ENCODE measurements at regions of chr11 and their contacts with region 1.

Region 1: DNA sequence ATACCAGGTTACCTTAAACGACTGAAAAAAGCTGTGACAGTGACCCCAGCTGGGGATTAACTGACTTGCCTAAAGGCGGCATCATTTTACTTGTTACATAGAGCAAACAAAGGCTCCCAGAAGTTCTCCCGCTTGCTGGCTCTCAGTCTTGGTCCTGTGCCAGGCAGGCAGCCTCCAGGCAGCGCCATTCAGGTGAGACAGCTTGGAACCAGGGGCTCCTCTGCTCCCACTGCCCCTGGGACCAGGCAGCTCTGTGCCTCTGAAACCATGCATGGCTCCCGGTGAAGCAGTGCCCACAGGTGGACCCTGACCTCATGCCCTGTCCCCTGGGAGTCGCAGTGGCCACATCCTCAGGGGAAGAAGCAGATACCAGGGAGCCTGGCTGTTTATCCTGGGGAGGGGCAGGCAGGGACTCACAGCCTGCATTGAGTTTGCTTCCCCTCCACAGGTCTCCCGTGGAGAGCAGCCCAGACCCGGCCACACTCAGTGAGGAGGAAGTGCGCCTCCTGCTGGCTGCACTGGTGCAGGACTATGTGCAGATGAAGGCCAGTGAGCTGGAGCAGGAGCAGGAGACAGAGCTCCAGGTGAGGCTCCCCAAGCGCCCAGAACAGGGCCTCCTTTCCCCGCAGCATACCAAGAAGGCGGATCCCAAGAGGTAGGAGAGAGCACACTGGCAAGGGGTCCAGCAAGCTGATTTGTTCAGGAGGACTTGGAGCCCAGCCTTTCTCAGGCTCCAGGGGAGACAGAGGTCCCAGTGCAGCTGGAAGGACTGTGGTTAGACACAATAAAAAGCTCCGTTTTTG is 15.6 kb upstream of the CYP2R1 start:
- DNase-seq: peak; percentile 79
- H3K4me3 Mint-ChIP-seq: no peak overlapping the region
- H3K27ac Mint-ChIP-seq: no peak overlapping the region
- H3K4me1 Mint-ChIP-seq: peaks cover 41% of the 10 kb centered on the region
- H3K27me3 Mint-ChIP-seq: no peaks in the 10 kb centered on the region

Region 2: DNA sequence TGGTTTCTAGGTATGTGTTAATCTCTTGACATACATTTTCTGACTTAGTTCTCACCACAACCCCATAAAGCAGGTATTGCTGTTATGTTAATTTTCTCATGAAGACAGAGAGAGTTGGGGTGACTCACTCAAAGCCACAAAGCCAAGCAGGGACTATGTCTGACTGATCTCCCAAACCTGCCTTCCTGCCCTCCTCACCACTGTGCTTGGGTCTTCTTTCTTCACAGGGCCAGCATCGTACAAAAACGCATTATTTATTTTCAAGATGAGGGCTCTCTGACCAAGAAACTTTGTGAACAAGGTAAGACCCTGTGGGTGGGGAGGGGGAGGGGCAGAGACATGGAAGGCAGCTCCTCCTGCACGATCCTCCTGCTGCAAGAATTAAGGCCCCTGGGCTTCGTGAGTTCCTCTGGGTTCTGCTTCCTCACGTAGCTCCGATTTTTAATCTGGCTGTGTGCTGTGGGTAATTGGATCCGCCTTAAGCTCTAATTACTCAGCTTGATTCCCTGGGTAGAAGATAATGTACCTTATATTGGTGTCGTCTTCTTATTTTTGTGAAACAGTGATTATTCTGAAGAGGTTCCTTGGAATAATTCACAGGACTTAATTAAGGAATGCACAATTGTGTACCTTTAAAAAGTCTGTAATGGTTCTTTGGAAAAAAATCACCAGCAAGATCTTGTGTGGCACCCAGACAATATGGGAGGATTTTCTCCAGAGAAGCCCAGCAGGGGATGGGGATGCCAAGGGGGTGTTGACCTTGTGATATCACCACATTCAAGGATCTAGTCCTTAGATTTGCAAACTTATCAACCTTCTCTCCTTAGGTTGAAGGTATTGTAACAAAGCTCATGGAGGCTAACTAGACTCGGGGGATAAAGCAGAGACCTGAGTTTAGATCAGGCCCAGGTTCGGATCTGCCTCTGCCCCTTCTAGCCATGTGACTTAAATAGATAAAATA is 832.2 kb before region 1 on chr11:
- intact Hi-C with region 1: loop called (anchors 10 kb)
- DNase-seq: peak; percentile 57
- H3K4me3 Mint-ChIP-seq: no peak overlapping the region
- H3K27ac Mint-ChIP-seq: no peak overlapping the region
- H3K4me1 Mint-ChIP-seq: peaks cover 43% of the 10 kb centered on the region
- H3K27me3 Mint-ChIP-seq: peaks cover 20% of the 10 kb centered on the region

Region 3: DNA sequence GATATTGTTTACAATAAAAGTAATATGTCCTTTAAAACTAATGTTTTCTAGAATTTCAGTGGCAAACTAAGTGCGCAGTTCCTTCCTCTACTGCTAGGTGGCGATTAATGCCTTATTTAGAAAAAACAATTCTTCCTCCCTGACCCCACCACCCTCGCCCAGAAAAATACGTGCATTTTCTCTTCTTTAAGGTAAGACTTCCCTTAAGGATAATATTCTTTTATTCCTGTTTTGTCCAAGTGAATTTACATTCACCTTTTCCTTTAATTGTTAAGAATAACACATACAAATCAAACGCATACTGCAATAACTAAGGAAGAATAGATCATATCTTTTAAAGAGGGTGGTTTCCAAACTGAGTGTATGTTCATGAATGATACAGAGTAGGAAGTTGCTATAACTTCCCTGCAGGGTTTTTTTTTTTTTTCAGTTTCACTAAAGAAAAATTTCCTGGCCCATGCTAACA is 370.4 kb before region 1 on chr11:
- intact Hi-C with region 1: loop called (anchors 1 kb)
- DNase-seq: no peak
- H3K4me3 Mint-ChIP-seq: peak overlapping the region; percentile 63
- H3K27ac Mint-ChIP-seq: peak overlapping the region; percentile 74
- H3K4me1 Mint-ChIP-seq: peaks cover 28% of the 10 kb centered on the region
- H3K27me3 Mint-ChIP-seq: no peaks in the 10 kb centered on the region

Region 4: GRCh38 chr11:14789879-14790484 is 117.6 kb before region 1 on chr11:
- intact Hi-C with region 1: loop called (anchors 1 kb)
- DNase-seq: no peak
- H3K4me3 Mint-ChIP-seq: no peak overlapping the region
- H3K27ac Mint-ChIP-seq: no peak overlapping the region
- H3K4me1 Mint-ChIP-seq: peaks cover 10% of the 10 kb centered on the region
- H3K27me3 Mint-ChIP-seq: no peaks in the 10 kb centered on the region

Region 5: GRCh38 chr11:14819596-14819995 is 88.0 kb before region 1 on chr11:
- intact Hi-C with region 1: no loop called
- DNase-seq: no peak
- H3K4me3 Mint-ChIP-seq: no peak overlapping the region
- H3K27ac Mint-ChIP-seq: no peak overlapping the region
- H3K4me1 Mint-ChIP-seq: peaks cover 7% of the 10 kb centered on the region
- H3K27me3 Mint-ChIP-seq: no peaks in the 10 kb centered on the region

Region 6: GRCh38 chr11:14927146-14927545 is 19.5 kb after region 1 on chr11:
- intact Hi-C with region 1: no loop called
- DNase-seq: no peak
- H3K4me3 Mint-ChIP-seq: no peak overlapping the region
- H3K27ac Mint-ChIP-seq: no peak overlapping the region
- H3K4me1 Mint-ChIP-seq: no peaks in the 10 kb centered on the region
- H3K27me3 Mint-ChIP-seq: peaks cover 2% of the 10 kb centered on the region

Region 7: GRCh38 chr11:14974515-14975251 is 67.1 kb after region 1 on chr11:
- intact Hi-C with region 1: loop called (anchors 2 kb)
- DNase-seq: peak; percentile 53
- H3K4me3 Mint-ChIP-seq: peak overlapping the region; percentile 33
- H3K27ac Mint-ChIP-seq: no peak overlapping the region
- H3K4me1 Mint-ChIP-seq: peaks cover 21% of the 10 kb centered on the region
- H3K27me3 Mint-ChIP-seq: peaks cover 75% of the 10 kb centered on the region

Region 8: DNA sequence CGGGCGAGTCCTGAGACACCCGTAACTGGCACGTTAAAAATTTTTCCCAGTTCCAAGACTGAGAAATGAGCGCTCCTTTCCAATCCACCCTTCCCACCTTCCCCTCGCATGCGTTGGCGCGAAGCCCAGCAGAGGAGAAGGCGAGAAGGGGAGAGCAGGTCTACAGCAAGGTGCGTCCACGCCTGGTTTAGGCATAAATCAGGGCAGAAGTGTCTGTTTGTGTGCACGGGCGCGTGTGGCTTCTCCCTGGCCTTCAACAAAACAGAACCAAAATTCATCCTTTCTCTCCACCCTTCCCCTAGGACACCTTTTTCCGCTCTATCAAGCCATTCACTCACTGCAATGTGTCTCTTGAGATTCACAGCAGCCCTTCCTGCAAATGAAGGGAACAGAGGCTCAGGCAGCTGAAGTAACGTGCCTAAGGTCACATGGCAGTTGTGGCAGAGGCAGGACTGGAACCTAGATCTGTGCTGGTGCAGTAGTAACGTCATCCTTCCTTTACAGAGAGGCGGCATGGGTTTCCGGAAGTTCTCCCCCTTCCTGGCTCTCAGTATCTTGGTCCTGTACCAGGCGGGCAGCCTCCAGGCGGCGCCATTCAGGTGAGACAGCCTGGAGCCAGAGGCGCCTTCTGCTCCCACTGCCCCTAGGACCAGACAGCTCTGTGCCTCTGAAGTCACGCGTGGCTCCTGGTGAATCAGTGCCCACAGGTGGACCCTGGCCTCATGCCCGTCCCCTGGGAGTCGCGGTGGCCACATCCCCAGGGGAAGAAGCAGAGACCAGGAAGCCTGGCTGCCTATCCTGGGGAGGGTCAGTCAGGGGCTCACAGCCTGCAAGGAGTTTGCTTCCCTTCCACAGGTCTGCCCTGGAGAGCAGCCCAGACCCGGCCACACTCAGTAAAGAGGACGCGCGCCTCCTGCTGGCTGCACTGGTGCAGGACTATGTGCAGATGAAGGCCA is 166.9 kb after region 1 on chr11:
- intact Hi-C with region 1: loop called (anchors 1 kb)
- DNase-seq: peak; percentile 78
- H3K4me3 Mint-ChIP-seq: peak overlapping the region; percentile 78
- H3K27ac Mint-ChIP-seq: peak overlapping the region; percentile 29
- H3K4me1 Mint-ChIP-seq: peaks cover 13% of the 10 kb centered on the region
- H3K27me3 Mint-ChIP-seq: peaks cover 34% of the 10 kb centered on the region

Region 9: DNA sequence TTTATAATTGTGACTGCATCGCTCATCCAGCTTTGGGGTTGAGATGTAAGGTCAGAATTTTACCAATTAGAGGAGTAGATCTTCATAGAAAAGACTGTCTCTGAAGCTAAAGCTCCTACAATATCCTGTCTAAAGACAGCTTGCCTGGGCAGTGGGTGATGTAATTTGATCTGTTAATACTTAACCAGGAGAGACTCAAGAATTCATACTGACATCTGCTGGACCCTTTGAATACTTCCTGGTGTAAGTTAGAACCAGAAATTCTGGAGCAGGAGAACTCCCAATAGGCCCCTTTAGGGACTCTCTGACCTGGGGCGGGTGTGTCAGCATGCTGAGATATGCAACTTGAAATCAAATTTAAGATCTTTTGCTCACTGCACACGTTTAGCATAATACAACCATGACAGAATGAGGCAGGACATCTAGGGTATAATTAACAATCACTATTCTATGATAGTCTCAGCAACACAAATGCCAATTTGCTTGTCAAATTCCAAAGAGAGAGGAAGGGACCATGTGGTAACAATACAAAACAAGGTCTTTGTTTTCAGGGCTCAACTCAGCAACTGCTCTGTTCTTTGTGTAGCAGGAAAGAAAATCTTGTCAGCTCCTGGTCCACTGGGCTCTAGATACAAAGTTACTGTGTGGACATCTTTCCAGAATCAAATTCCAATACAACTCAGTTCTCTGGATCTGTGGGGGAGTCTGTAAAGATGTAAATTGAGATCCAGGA is 351.0 kb after region 1 on chr11:
- intact Hi-C with region 1: no loop called
- DNase-seq: no peak
- H3K4me3 Mint-ChIP-seq: no peak overlapping the region
- H3K27ac Mint-ChIP-seq: no peak overlapping the region
- H3K4me1 Mint-ChIP-seq: no peaks in the 10 kb centered on the region
- H3K27me3 Mint-ChIP-seq: no peaks in the 10 kb centered on the region